IMR-90 (cell line): ENCODE measurements at regions of chr1 and their contacts with region 1.

Region 1: DNA sequence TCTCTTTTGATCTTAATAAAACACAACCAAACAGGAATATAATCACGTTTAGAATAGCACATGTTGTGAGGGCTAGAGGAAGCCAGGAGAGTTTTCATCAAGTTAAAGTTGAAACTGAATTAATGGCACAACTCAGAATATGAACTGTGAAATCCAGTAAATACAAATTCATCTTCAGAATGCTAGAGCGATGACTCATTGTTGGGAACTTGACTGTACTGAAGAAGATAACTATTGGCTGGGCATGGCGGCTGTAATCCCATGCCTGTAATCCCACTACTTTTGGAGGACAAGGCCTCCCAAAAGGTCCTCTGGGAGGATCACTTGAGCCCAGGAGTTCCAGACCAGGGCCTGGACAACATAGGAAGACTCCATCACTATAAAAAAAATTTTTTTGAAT is 8.8 kb downstream of the SYF2 start:
- DNase-seq: peak; percentile 56
- ATAC-seq: peak; percentile 48
- H3K4me3 ChIP-seq: no peak overlapping the region
- H3K27ac ChIP-seq: no peak overlapping the region
- H3K4me1 ChIP-seq: no peaks in the 10 kb centered on the region
- H3K27me3 ChIP-seq: no peaks in the 10 kb centered on the region
- CTCF ChIP-seq: no peak
- POLR2A ChIP-seq: no peak
- RAD21 ChIP-seq: no peak

Region 2: GRCh38 chr1:24642481-24643361 is 580.8 kb before region 1 on chr1 and contains the start of gene SRRM1:
- CTCF ChIA-PET with region 1: no interaction called
- POLR2A ChIA-PET with region 1: no interaction called
- dilution Hi-C with region 1: no loop called
- in situ Hi-C with region 1: no loop called
- intact Hi-C with region 1: loop called (anchors 10 kb)
- DNase-seq: peak; percentile 100
- ATAC-seq: peak; percentile 94
- H3K4me3 ChIP-seq: peak within 1 kb of the TSS; percentile 85
- H3K27ac ChIP-seq: peak within 1 kb of the TSS; percentile 96
- H3K4me1 ChIP-seq: peaks cover 6% of the 10 kb centered on the region
- H3K27me3 ChIP-seq: peaks cover under 1% of the 10 kb centered on the region; the same call in 1 of the 2 replicates
- CTCF ChIP-seq: peak; percentile 10; the same call in 1 of the 2 replicates
- POLR2A ChIP-seq: peak; percentile 99
- RAD21 ChIP-seq: peak; percentile 24
- total RNA-seq, gene SRRM1: 13.6 and 24.2 TPM in 2 replicates